Activated CD4-positive, alpha-beta T cell treated with anti-CD3 and anti-CD28 coated beads for 36 hours (primary cell): ENCODE measurements at regions of chr2 and their contacts with region 1.

Region 1: DNA sequence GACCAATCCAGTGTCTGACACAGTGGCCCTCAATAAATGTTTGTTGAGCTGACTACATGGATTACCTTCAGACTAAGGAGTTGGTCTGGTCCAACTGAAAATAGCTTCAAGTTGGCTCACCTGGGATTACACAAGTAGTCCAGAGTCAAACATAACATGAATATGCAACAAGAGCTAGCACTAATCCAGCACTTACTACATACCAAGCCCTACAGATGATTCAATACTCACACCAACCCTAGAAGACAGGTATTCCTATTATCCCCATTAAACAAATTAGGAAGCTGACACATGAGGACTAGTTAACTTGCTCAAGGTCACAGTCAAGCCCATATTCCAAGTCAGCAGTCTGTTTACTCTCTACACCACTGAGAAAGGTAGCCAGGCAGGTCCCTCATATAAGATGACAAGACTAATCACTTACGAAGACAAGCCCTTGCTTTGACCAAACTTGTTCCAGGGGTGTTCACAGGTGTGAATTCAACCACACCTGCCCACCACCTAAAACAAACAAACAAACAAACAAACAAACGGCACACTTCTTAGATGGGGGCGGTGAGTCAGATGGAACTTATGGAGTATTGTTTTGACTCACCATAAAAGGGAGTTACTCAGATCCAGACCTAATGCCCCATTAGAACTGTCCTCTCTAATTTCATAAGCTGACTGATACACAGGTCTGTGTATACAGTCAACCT is 29.1 kb downstream of the TMEM131 start:
- DNase-seq: no peak
- ATAC-seq: peak; percentile 60
- H3K4me3 Mint-ChIP-seq: no peak overlapping the region
- H3K27ac Mint-ChIP-seq: no peak overlapping the region
- H3K4me1 Mint-ChIP-seq: peaks cover 79% of the 10 kb centered on the region
- H3K27me3 Mint-ChIP-seq: no peaks in the 10 kb centered on the region

Region 2: DNA sequence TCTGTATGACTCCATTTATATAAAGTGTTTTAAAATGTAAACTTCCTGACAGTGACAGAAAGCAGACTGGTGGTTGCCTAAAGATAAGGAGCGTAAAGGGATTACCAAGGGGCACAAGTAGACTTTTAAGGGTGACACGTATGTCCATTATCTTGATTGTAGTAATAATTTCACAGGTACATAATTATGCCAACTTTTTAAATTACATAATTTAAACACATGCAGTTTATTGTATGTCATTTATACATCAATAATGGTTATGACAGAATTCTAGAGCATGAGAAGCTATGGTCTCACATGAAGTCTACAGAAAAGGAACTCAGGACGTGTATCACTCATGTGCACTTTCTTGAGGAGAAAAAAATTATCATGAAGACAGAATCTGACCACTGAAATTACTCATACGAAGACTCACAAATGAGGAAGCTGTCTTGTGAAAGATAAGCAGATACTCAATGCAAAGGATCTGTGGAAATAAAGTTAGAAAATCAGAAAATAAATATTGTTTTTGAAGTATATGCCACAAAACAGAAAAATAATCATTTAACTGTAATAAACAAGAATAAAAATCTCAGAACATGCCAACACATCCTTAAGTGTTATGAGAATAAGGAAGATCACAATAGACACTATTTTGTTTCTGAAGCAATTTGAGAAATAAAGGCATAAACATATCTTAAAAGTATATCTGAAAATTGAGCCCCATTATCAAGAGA is 55.3 kb before region 1 on chr2:
- CTCF ChIA-PET with region 1: no interaction called
- POLR2A ChIA-PET with region 1: no interaction called
- intact Hi-C with region 1: no loop called
- DNase-seq: no peak
- ATAC-seq: peak; percentile 44
- H3K4me3 Mint-ChIP-seq: no peak overlapping the region
- H3K27ac Mint-ChIP-seq: peak overlapping the region; percentile 22
- H3K4me1 Mint-ChIP-seq: peaks cover 45% of the 10 kb centered on the region
- H3K27me3 Mint-ChIP-seq: no peaks in the 10 kb centered on the region

Region 3: GRCh38 chr2:97979894-97980293 is 13.2 kb after region 1 on chr2:
- CTCF ChIA-PET with region 1: interaction called, 3 read pairs
- POLR2A ChIA-PET with region 1: no interaction called
- intact Hi-C with region 1: loop called (anchors 2 kb)
- DNase-seq: no peak
- ATAC-seq: no peak
- H3K4me3 Mint-ChIP-seq: no peak overlapping the region
- H3K27ac Mint-ChIP-seq: no peak overlapping the region
- H3K4me1 Mint-ChIP-seq: peaks cover 19% of the 10 kb centered on the region
- H3K27me3 Mint-ChIP-seq: no peaks in the 10 kb centered on the region

Region 4: DNA sequence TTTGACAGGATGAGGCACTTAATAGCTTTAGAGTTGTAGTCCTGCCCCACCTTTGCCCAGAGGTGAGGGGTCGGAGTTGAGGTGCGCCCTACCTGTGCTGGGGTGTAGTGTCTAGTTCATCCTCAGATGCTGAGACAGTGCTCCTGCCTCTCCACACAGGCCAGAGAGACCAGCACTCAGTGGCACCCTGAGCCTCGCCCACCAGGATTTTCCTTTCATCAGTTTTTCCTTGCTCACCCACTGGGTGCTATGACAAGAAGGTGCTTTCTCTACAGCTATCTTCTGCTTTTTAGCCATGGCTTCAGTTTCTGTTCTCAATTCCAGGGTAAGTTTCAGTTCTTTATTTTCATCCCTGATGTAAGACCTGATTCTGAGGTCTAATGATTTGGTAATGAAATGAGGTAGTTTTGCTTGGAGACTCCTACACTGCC is 45.9 kb after region 1 on chr2:
- CTCF ChIA-PET with region 1: no interaction called
- POLR2A ChIA-PET with region 1: no interaction called
- intact Hi-C with region 1: loop called (anchors 1 to 5 kb)
- DNase-seq: peak; percentile 81
- ATAC-seq: peak; percentile 83
- H3K4me3 Mint-ChIP-seq: no peak overlapping the region
- H3K27ac Mint-ChIP-seq: peak overlapping the region; percentile 61
- H3K4me1 Mint-ChIP-seq: peaks cover 33% of the 10 kb centered on the region
- H3K27me3 Mint-ChIP-seq: peaks cover 9% of the 10 kb centered on the region

Region 5: GRCh38 chr2:98263362-98263761 is 296.7 kb after region 1 on chr2:
- CTCF ChIA-PET with region 1: no interaction called
- POLR2A ChIA-PET with region 1: no interaction called
- intact Hi-C with region 1: no loop called
- DNase-seq: no peak
- ATAC-seq: no peak
- H3K4me3 Mint-ChIP-seq: no peak overlapping the region
- H3K27ac Mint-ChIP-seq: no peak overlapping the region
- H3K4me1 Mint-ChIP-seq: no peaks in the 10 kb centered on the region
- H3K27me3 Mint-ChIP-seq: peaks cover 15% of the 10 kb centered on the region